Activated T-helper 2 cell treated with anti-CD3 and anti-CD28 coated beads, Interferon-gamma antibody, Interleukin-2, Interleukin-4, amounts not matched to agents 10 μg/mL and 5 μg/mL and 100 μg/mL, durations not matched to agents 14 hours and 24 hours and 36 hours (primary cell): ENCODE measurements at regions of chr20 and their contacts with region 1.

Region 1: GRCh38 chr20:47453142-47453782 is 48.4 kb upstream of the NCOA3 start:
- DNase-seq: peak; percentile 58
- H3K4me3 Mint-ChIP-seq: no peak overlapping the region
- H3K27ac Mint-ChIP-seq: peak overlapping the region; percentile 78
- H3K4me1 Mint-ChIP-seq: peaks cover 47% of the 10 kb centered on the region
- H3K27me3 Mint-ChIP-seq: no peaks in the 10 kb centered on the region

Region 2: DNA sequence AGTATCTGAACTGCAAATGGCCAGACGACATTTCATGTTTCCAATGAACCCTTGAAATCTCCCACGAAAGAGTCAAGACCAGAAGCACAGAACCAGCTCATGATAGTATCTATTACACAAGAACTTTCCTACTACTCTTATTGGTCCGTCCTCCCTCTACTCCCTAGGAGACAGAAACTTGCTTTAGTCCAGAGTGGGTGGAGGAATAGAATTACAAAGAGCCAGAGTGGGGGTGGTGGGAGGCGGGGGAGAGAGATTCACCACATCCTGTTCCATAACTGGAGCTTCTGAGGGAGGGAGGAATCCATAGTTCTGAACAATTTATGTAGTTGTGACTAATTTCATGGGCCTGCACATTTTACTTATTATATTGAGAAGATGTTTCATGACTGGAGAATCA is 1842.2 kb before region 1 on chr20:
- intact Hi-C with region 1: loop called (anchors 10 kb)
- DNase-seq: no peak
- H3K4me3 Mint-ChIP-seq: no peak overlapping the region
- H3K27ac Mint-ChIP-seq: peak overlapping the region; percentile 21
- H3K4me1 Mint-ChIP-seq: peaks cover 27% of the 10 kb centered on the region
- H3K27me3 Mint-ChIP-seq: peaks cover 6% of the 10 kb centered on the region

Region 3: DNA sequence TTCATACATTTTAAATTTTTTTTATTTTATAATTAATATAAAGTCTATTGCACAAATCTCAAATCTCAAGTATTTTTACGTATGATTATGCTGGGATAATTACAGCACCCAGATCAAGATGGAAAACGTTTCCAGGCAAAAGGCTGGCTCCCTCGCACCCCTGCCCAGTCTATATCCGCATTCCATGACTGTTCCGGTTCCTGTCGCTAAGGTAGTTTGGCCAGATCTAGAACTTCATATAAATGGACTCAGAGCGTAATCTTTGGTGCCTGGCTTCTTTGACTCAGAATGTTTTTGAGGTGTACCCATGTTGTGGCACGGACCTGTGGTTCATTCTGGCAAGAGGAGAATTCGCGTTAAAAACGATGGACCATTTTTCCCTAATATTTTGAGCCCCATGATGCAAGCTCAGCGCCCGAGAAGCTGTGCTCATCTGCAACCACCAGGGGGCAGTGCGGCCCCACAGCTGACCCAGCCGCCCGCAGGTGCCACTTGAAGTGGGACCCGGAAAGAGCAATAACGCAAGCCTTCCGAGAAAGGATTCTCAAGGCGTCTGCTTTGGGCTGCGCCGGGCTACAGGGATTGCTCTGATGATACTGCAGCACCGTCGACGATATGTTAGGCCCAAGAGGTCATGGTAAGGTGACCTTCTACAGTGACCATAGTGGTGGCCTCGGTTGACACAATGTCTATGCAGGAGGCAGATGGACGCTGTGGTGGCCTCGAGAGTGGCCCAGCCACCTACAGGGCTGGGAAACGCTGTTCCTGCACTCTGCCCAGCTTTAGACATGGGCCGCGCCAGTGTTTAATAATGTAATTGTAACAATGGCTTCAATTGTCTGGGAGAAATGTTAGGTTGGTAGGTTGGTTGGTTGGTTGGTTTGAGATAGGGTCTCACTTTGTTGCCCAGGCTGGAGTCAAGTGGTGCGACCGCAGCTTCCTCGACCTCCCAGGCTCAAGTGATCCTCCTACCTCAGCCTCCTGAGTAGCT is 256.9 kb before region 1 on chr20:
- intact Hi-C with region 1: loop called (anchors 1 kb)
- DNase-seq: peak; percentile 69
- H3K4me3 Mint-ChIP-seq: no peak overlapping the region
- H3K27ac Mint-ChIP-seq: no peak overlapping the region
- H3K4me1 Mint-ChIP-seq: peaks cover 18% of the 10 kb centered on the region
- H3K27me3 Mint-ChIP-seq: peaks cover 12% of the 10 kb centered on the region

Region 4: GRCh38 chr20:47379433-47380150 is 73.7 kb before region 1 on chr20:
- intact Hi-C with region 1: loop called (anchors 5 kb)
- DNase-seq: no peak
- H3K4me3 Mint-ChIP-seq: no peak overlapping the region
- H3K27ac Mint-ChIP-seq: peak overlapping the region; percentile 44
- H3K4me1 Mint-ChIP-seq: peaks cover 15% of the 10 kb centered on the region
- H3K27me3 Mint-ChIP-seq: no peaks in the 10 kb centered on the region

Region 5: DNA sequence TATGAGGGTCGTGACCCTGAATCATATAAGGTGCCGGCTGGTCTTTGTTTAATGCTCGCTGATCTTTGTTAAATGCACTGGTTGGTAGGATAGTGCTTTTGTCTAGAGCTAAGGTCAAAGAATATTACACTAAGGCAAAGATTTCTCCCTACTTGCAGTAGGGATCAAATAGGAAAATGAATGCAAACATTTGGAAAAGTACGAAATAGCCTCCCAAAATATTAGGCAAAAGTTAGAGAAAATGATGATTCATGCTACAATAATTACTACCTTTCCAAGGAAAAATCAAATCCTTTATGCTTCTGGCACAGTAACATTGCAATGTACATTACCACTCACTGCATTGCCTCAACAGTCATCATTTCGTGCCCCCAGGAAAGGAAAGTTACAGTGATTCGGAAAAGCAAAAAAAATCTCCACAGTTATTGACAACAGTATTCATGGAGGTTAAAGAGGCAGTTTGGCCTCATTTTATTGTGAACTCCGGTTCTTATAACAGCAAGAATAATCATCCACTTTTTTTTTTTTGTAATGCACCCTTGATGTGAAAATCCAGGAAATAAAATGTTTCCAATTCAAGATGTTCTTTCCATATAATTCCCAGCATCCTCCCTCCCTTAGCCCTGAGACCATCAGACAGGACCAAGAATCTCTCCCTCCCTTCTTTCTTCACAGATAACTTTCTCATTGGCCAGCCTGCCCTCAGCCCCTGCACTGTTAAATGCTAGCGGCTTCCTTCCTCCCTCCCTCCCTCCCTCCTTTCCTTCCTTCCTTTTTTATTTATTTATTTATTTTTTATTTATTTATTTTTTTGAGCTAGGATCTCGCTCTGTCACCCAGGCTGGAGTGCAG is 35.0 kb before region 1 on chr20:
- intact Hi-C with region 1: loop called (anchors 5 kb)
- DNase-seq: no peak
- H3K4me3 Mint-ChIP-seq: no peak overlapping the region
- H3K27ac Mint-ChIP-seq: no peak overlapping the region
- H3K4me1 Mint-ChIP-seq: peaks cover 18% of the 10 kb centered on the region
- H3K27me3 Mint-ChIP-seq: no peaks in the 10 kb centered on the region

Region 6: GRCh38 chr20:47487175-47487917 is 34.1 kb after region 1 on chr20:
- intact Hi-C with region 1: loop called (anchors 1 kb)
- DNase-seq: peak; percentile 69
- H3K4me3 Mint-ChIP-seq: peak overlapping the region; percentile 60
- H3K27ac Mint-ChIP-seq: peak overlapping the region; percentile 99
- H3K4me1 Mint-ChIP-seq: peaks cover 53% of the 10 kb centered on the region
- H3K27me3 Mint-ChIP-seq: no peaks in the 10 kb centered on the region

Region 7: DNA sequence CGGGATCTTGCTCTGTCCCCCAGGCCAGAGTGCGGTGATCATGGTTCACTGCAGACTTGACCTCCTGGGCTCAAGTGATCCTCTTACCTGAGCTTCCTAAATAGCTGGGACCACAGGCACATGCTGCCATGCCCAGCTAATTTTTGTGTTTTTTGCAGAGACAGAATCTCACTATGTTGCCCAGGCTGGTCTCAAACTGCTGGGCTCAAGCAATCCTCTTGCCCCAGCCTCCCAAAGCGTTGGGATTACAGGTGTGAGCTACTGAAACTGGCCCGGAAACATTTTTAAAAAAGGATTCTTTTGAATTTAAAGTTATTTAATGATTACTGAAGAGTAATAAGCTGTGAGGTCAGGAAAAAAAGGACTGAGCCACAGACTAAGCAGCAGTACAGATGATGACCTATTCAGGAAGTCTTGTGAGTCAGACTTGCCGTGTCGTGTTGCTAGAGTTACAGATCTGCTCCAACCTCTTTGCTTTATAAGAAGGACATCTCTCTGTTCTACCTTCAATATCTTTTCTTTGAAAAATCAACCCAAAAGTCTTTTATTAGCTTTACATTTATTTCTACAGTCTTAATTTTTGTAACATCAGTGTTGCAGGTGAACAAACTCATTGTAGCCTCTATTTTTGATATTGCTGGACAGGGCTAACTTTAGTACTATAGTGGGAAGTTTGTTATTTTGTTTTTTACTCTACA is 157.1 kb after region 1 on chr20:
- intact Hi-C with region 1: loop called (anchors 2 kb)
- DNase-seq: peak; percentile 64
- H3K4me3 Mint-ChIP-seq: peak overlapping the region; percentile 76
- H3K27ac Mint-ChIP-seq: peak overlapping the region; percentile 99
- H3K4me1 Mint-ChIP-seq: peaks cover 77% of the 10 kb centered on the region
- H3K27me3 Mint-ChIP-seq: no peaks in the 10 kb centered on the region